PC-9 (cell line): ENCODE measurements at regions of chr9 and their contacts with region 1.

Region 1: GRCh38 chr9:2281031-2281802 is 266.1 kb downstream of the SMARCA2 start:
- DNase-seq: peak; percentile 75 to 83
- H3K4me3 ChIP-seq: no peak overlapping the region
- H3K27ac ChIP-seq: peak overlapping the region; percentile 49
- H3K4me1 ChIP-seq: peaks cover 18% of the 10 kb centered on the region
- H3K27me3 ChIP-seq: no peaks in the 10 kb centered on the region
- CTCF ChIP-seq: no peak

Region 2: GRCh38 chr9:1829719-1830118 is 451.5 kb before region 1 on chr9:
- CTCF ChIA-PET with region 1: no interaction called
- POLR2A ChIA-PET with region 1: no interaction called
- intact Hi-C with region 1: no loop called
- DNase-seq: no peak
- H3K4me3 ChIP-seq: no peak overlapping the region
- H3K27ac ChIP-seq: no peak overlapping the region
- H3K4me1 ChIP-seq: no peaks in the 10 kb centered on the region
- H3K27me3 ChIP-seq: no peaks in the 10 kb centered on the region
- CTCF ChIP-seq: no peak

Region 3: DNA sequence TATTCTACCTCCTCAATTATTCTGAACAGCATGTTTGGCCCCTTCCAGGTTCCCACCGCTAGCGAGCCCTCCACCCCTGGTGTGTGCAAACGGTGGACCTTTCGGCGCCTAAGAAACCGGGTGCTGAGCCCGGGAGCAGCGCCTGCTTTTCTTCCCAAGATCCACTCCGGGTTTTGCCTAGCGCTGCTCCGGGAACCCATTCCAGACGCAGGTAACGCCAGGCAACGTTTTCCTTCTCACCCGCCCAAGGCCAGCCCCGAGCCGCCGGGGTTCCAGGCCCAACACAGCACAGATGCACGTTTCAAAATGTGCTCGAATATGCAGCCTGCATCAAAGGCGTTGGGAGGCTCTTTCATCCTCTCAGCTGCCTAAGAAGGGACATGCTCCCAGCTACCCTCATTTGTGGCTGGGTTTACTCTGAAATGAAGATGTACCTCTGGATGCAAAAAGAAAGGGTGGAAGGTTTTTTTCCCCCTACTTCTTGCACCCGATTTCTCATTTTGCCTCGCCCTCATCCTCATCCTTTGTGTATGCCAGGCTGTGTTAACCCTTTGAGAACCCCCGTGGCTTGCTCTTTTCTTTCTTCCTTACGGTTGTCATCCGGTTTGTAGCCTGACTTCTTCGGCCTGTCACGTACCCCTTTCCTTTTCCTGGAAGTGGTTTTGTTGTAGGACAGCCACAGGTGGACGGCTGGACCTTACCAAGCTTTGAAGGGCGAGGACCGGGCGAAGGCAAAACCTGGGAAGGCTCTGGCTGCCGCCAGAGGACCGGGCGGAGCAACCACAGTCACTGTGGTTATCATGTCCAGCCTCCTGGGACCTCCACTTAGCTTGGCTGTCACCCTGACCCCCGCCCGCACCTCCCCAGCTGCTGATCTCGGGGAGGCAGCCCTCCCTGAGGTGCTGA is 39.1 kb before region 1 on chr9:
- CTCF ChIA-PET with region 1: no interaction called
- POLR2A ChIA-PET with region 1: no interaction called
- intact Hi-C with region 1: loop called (anchors 1 kb)
- DNase-seq: peak; percentile 61 to 75
- H3K4me3 ChIP-seq: peak overlapping the region; percentile 68
- H3K27ac ChIP-seq: peak overlapping the region; percentile 39
- H3K4me1 ChIP-seq: 0 out of 2 replicates have a peak, but pooled peaks cover 4% of the 10 kb centered on the region
- H3K27me3 ChIP-seq: no peaks in the 10 kb centered on the region
- CTCF ChIP-seq: no peak

Region 4: DNA sequence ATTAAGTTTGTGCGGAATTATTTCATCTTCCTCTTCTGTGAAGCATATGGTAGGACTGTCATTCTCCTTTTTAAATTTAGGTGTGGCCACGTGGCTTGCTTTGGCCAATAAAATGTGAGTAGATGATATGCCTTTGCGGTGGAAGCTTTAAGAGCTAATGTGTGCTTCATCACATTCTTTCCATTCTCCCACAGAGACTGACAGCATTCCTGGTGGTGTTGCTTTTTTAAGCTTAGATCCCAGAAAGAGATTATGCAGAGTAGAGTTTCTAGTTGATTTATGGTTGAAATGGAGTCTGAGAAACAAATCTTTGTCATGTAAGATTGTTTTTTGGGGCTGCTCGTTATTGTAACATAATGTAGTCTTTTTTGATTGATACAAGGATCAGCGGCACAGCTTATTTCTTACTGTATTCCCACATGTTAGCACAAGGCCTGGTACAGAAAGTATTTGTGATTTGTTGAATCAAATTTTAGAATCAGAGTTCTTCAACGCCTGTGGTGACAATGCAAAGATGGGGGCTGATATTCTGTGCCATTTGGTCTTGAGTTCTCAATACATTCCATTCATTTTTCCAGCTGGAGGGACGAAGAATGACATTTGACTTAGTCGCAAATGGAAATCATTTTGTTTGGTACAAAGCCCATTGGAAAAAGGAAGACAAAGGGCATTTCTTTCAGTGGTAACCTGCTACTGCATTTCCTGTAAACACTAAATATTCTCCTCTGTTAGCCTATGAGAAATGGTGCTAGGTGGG is 130.4 kb after region 1 on chr9:
- CTCF ChIA-PET with region 1: no interaction called
- POLR2A ChIA-PET with region 1: interaction called, 3 read pairs
- intact Hi-C with region 1: loop called (anchors 2 kb)
- DNase-seq: peak; percentile 18 to 38
- H3K4me3 ChIP-seq: no peak overlapping the region
- H3K27ac ChIP-seq: no peak overlapping the region
- H3K4me1 ChIP-seq: no peaks in the 10 kb centered on the region
- H3K27me3 ChIP-seq: no peaks in the 10 kb centered on the region
- CTCF ChIP-seq: no peak

Region 5: GRCh38 chr9:2570615-2571479 is 289.6 kb after region 1 on chr9:
- CTCF ChIA-PET with region 1: no interaction called
- POLR2A ChIA-PET with region 1: no interaction called
- intact Hi-C with region 1: loop called (anchors 5 kb)
- DNase-seq: peak; percentile 90 to 97
- H3K4me3 ChIP-seq: no peak overlapping the region; the same call in 1 of the 2 replicates
- H3K27ac ChIP-seq: peak overlapping the region; percentile 77
- H3K4me1 ChIP-seq: peaks cover 61% of the 10 kb centered on the region
- H3K27me3 ChIP-seq: no peaks in the 10 kb centered on the region
- CTCF ChIP-seq: no peak